Activated naive CD4-positive, alpha-beta T cell treated with anti-CD3 and anti-CD28 coated beads for 36 hours (primary cell): ENCODE measurements at regions of chr5 and their contacts with region 1.

Region 1: GRCh38 chr5:67209142-67209771 is 12.7 kb upstream of the CD180 start:
- DNase-seq: peak; percentile 79
- H3K4me3 Mint-ChIP-seq: no peak overlapping the region
- H3K27ac Mint-ChIP-seq: peak overlapping the region; percentile 50
- H3K4me1 Mint-ChIP-seq: peaks cover 56% of the 10 kb centered on the region
- H3K27me3 Mint-ChIP-seq: no peaks in the 10 kb centered on the region

Region 2: DNA sequence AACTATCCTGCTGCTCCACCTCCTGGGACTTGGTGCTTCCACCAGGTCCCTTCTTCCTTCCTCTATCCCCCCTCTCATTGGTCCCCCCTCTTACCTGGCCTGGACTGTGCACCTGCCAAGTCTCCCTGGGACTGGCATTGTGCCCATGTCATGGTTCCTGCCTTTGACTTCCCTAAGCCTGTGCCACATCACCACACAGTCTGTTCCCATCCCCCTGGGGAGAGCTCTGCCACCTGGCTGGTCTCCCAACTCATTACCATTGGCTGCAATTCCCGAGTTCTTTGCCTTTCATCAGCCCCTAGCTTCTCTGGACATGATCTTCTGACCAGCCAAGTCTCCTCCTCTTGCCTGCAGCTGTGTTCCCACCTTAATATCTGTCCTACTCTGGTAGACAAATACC is 884.9 kb before region 1 on chr5:
- CTCF ChIA-PET with region 1: no interaction called
- intact Hi-C with region 1: loop called (anchors 2 kb)
- DNase-seq: no peak
- H3K4me3 Mint-ChIP-seq: no peak overlapping the region
- H3K27ac Mint-ChIP-seq: no peak overlapping the region
- H3K4me1 Mint-ChIP-seq: peaks cover 10% of the 10 kb centered on the region
- H3K27me3 Mint-ChIP-seq: no peaks in the 10 kb centered on the region

Region 3: GRCh38 chr5:66814146-66814991 is 394.9 kb before region 1 on chr5:
- CTCF ChIA-PET with region 1: interaction called, 3 read pairs
- intact Hi-C with region 1: loop called (anchors 1 kb)
- DNase-seq: peak; percentile 79
- H3K4me3 Mint-ChIP-seq: no peak overlapping the region
- H3K27ac Mint-ChIP-seq: no peak overlapping the region
- H3K4me1 Mint-ChIP-seq: peaks cover 3% of the 10 kb centered on the region
- H3K27me3 Mint-ChIP-seq: no peaks in the 10 kb centered on the region

Region 4: DNA sequence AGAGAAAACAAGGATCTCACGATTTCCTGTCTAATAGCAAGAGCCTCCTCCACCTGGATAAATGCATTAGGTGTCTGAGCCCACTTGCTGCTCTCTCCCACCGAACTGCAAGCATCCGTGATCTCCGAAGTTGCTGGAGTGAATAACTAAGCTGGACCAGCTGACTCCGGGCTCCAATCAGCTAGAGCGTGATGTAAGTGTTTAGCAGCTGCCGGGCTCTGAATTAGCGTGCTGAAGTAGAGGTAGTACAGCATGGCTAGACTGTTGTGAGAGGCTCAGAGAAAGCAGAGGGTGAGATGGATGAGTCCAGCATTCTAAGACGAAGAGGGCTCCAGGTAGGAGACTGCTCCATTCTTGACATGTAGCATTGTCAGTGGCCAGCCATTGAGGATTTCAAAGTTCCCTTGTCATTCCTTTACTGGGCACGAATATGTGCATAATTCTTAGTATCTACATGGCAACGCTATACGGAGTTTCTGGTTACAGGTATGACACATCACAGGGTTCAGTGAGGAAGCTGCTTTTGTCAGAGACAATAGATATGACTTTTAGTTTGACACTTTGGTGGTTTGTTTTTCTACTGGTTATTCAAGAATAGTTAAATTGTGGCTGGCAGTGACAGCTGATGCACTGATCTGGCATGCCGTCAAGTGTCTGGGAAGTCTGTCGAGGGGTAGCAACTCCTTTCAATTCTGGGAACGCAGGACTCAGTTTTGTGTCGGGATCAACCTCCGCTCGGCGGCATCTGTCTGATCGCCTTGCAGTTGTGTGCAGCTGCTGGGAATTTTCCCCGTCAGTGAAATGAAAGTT is 380.5 kb before region 1 on chr5:
- CTCF ChIA-PET with region 1: no interaction called
- intact Hi-C with region 1: loop called (anchors 1 kb)
- DNase-seq: peak; percentile 84
- H3K4me3 Mint-ChIP-seq: peak overlapping the region; percentile 87
- H3K27ac Mint-ChIP-seq: peak overlapping the region; percentile 84
- H3K4me1 Mint-ChIP-seq: peaks cover 24% of the 10 kb centered on the region
- H3K27me3 Mint-ChIP-seq: peaks cover 29% of the 10 kb centered on the region

Region 5: GRCh38 chr5:67065237-67065636 is 144.0 kb before region 1 on chr5:
- CTCF ChIA-PET with region 1: no interaction called
- intact Hi-C with region 1: loop called (anchors 1 kb)
- DNase-seq: peak; percentile 47
- H3K4me3 Mint-ChIP-seq: no peak overlapping the region
- H3K27ac Mint-ChIP-seq: peak overlapping the region; percentile 72
- H3K4me1 Mint-ChIP-seq: peaks cover 25% of the 10 kb centered on the region
- H3K27me3 Mint-ChIP-seq: no peaks in the 10 kb centered on the region

Region 6: GRCh38 chr5:67165526-67166459 is 43.5 kb before region 1 on chr5:
- CTCF ChIA-PET with region 1: interaction called, 354 read pairs
- intact Hi-C with region 1: loop called (anchors 1 kb)
- DNase-seq: peak; percentile 91
- H3K4me3 Mint-ChIP-seq: peak overlapping the region; percentile 76
- H3K27ac Mint-ChIP-seq: peak overlapping the region; percentile 88
- H3K4me1 Mint-ChIP-seq: peaks cover 57% of the 10 kb centered on the region
- H3K27me3 Mint-ChIP-seq: no peaks in the 10 kb centered on the region

Region 7: DNA sequence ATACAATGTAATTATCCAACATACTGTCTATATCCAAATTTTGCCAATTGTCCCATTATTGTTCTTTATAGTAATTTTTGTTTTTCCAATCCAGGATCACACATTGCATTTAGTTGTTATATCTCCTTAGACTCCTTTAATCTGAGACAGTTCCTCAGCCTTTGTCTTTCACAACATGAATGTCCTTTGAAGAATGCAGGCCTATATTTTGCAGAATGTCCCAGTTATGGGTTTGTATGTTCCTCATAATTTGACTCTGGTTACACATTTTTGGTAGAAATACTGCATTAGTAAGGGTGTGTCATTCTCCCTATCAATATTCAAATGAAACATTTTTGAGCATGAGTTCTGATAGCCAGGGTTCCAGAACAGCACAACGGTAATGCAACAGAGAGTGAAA is 19.3 kb before region 1 on chr5:
- CTCF ChIA-PET with region 1: no interaction called
- intact Hi-C with region 1: no loop called
- DNase-seq: no peak
- H3K4me3 Mint-ChIP-seq: no peak overlapping the region
- H3K27ac Mint-ChIP-seq: no peak overlapping the region
- H3K4me1 Mint-ChIP-seq: peaks cover 32% of the 10 kb centered on the region
- H3K27me3 Mint-ChIP-seq: no peaks in the 10 kb centered on the region

Region 8: DNA sequence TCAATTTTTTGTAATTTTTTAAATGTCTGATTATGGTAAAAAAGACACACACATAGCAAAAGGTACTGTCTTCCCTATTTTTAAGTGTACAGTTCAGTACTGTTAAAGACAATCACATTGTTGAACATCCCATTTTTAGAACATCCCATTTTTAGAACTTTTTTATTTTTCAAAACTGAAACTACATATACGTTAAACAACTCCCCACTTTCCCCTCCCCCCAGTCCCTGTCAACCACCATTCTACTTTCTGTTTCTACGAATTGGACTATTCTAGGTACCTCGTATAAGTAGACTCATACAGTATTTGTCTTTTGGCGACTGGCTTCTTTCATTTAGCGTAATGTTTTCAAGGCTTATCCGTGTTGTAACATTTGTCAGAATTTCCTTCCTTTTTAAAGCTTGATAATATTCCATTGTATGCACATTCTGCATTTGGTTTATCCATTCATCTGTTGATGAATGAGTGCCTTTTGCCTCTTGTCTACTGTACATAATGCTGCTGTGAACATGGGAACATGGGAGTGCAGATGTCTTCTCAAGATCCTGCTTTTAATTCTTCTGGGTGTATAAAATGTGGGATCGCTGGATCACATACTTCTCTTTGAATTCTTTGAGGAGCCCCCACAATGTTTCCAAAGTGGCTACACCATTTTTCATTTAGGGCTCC is 1160.3 kb after region 1 on chr5:
- CTCF ChIA-PET with region 1: no interaction called
- intact Hi-C with region 1: no loop called
- DNase-seq: peak; percentile 73
- H3K4me3 Mint-ChIP-seq: no peak overlapping the region
- H3K27ac Mint-ChIP-seq: peak overlapping the region; percentile 19
- H3K4me1 Mint-ChIP-seq: peaks cover 36% of the 10 kb centered on the region
- H3K27me3 Mint-ChIP-seq: no peaks in the 10 kb centered on the region